ENCODE measurements at regions of chr9 and their contacts with region 1.

Region 1: GRCh38 chr9:116163293-116164055 is 9.9 kb downstream of the PAPPA start:
- DNase-seq: no peak
- ATAC-seq: peak in 4 of 8 donors; percentile 7 to 41 (median 24)
- H3K4me3 ChIP-seq: no peak overlapping the region
- H3K27ac ChIP-seq: no peak overlapping the region
- H3K4me1 ChIP-seq: peaks cover 0 to 8% (median 0%) of the 10 kb centered on the region in 9 donors
- H3K27me3 ChIP-seq: peaks cover 0 to 4% (median 0%) of the 10 kb centered on the region in 7 donors
- CTCF ChIP-seq: peak in 7 of 9 donors; percentile 37 to 53 (median 48)

Region 2: GRCh38 chr9:116365056-116365471 is 201.6 kb after region 1 on chr9:
- intact Hi-C with region 1: loop called in 1 of 10 experiments (anchors 10 kb)
- DNase-seq: peak; percentile 51 to 73
- ATAC-seq: peak; percentile 86 to 99 (median 95)
- H3K4me3 ChIP-seq: peak overlapping the region in 4 of 10 donors; percentile 5 to 14 (median 7)
- H3K27ac ChIP-seq: peak overlapping the region in 7 of 10 donors; percentile 14 to 75 (median 59)
- H3K4me1 ChIP-seq: peaks cover 0 to 25% (median 8%) of the 10 kb centered on the region in 9 donors
- H3K27me3 ChIP-seq: no peaks in the 10 kb centered on the region
- CTCF ChIP-seq: peak in 4 of 9 donors; percentile 9 to 27 (median 23)

Region 3: GRCh38 chr9:116494815-116495634 is 331.6 kb after region 1 on chr9:
- intact Hi-C with region 1: loop called in 6 of 10 experiments (anchors 5 to 10 kb)
- DNase-seq: peak in 1 of 2 donors; percentile 9
- ATAC-seq: peak in 1 of 8 donors; percentile 37
- H3K4me3 ChIP-seq: no peak overlapping the region
- H3K27ac ChIP-seq: no peak overlapping the region
- H3K4me1 ChIP-seq: peaks cover 0 to 9% (median 0%) of the 10 kb centered on the region in 9 donors
- H3K27me3 ChIP-seq: no peaks in the 10 kb centered on the region
- CTCF ChIP-seq: peak; percentile 35 to 76 (median 66)